PC-9 (cell line): ENCODE measurements at regions of chr11 and their contacts with region 1.

Region 1: GRCh38 chr11:103529181-103529684 is 420.0 kb downstream of the DYNC2H1 start:
- DNase-seq: peak; percentile 19 to 66
- H3K4me3 ChIP-seq: no peak overlapping the region
- H3K27ac ChIP-seq: peak overlapping the region; percentile 5; the same call in 1 of the 2 replicates
- H3K4me1 ChIP-seq: peaks cover 55% of the 10 kb centered on the region
- H3K27me3 ChIP-seq: no peaks in the 10 kb centered on the region
- CTCF ChIP-seq: no peak

Region 2: DNA sequence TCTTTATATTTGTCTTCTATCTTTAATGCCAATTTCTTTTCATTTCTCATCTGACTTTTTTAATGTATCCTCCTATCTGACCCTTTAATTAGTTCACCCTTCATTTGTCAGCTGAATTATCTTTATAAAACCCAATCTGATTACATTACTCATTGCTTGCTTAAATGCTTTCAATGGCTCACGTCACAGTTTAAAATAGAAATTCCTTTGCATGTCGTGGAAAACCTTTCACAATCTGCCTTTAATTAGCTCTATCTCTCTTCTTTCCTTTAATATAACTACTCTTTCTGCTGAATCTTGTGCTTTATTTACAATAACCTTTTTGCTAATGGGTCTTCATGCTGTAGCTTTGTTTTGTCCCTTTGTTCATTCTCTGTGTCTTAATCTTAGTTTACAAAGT is 294.3 kb before region 1 on chr11:
- CTCF ChIA-PET with region 1: no interaction called
- POLR2A ChIA-PET with region 1: no interaction called
- intact Hi-C with region 1: no loop called
- DNase-seq: no peak
- H3K4me3 ChIP-seq: no peak overlapping the region
- H3K27ac ChIP-seq: no peak overlapping the region
- H3K4me1 ChIP-seq: no peaks in the 10 kb centered on the region
- H3K27me3 ChIP-seq: no peaks in the 10 kb centered on the region
- CTCF ChIP-seq: no peak

Region 3: DNA sequence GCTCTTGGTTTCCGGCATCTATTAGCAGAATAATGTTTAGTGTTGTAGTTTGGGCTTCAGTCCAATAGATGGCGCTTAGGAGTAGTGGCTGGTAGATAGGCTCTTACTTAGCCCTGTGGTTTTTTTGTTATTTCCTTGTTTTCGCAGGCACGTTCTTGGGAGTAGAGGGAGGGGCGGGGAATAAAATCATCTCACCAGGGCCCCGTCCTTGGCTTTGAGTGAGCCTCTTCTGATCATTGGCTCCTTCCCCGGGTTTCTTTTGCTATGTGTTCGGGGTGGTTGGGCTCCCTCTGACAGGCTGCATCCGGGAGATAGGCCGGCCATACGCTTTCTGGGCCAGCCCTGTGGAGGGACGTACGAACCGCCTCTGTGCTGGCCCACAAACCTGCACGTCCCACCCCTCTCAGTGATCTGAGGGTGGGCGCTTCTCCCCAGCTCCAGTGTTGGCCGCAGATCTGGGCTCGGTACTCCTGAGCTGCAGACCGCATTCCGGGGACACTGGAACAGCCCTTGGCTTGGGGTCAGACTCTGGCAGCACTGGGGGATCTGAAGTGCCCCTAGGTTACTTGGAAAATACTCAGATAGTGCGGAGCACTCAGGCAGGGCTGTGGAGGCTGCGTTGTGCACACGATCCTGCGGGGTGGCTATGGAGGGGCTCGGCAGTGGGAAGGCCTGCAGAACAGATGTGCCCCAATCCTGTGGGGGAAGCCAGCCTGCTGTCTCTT is 203.0 kb before region 1 on chr11:
- CTCF ChIA-PET with region 1: no interaction called
- POLR2A ChIA-PET with region 1: no interaction called
- intact Hi-C with region 1: loop called (anchors 5 kb)
- DNase-seq: peak; percentile 29 to 49
- H3K4me3 ChIP-seq: no peak overlapping the region
- H3K27ac ChIP-seq: no peak overlapping the region
- H3K4me1 ChIP-seq: no peaks in the 10 kb centered on the region
- H3K27me3 ChIP-seq: no peaks in the 10 kb centered on the region
- CTCF ChIP-seq: peak; percentile 85

Region 4: GRCh38 chr11:103433386-103434380 is 95.5 kb before region 1 on chr11:
- CTCF ChIA-PET with region 1: no interaction called
- POLR2A ChIA-PET with region 1: no interaction called
- intact Hi-C with region 1: loop called (anchors 2 kb)
- DNase-seq: peak in 1 of 2 experiments; percentile 69
- H3K4me3 ChIP-seq: no peak overlapping the region
- H3K27ac ChIP-seq: no peak overlapping the region
- H3K4me1 ChIP-seq: 0 out of 2 replicates have a peak, but pooled peaks cover 4% of the 10 kb centered on the region
- H3K27me3 ChIP-seq: no peaks in the 10 kb centered on the region
- CTCF ChIP-seq: no peak

Region 5: DNA sequence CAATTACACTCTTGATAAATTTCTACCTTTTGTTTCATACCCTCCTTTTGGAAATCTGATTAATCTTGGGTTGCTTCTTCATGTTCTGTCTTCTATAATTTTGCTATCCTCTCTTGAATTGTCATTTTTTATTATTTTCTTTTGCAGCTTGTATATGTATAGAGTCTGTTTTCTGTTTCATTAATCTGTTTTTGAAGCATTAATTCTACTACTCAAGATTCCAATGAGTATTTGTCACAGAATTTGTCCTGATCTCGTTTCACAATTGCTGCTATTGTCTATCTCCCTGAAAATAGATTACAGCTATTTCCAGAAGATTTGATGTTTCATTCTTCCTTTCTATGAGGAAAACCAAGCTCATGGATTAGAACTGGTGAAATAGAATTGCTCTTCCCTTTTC is 13.9 kb before region 1 on chr11:
- CTCF ChIA-PET with region 1: no interaction called
- POLR2A ChIA-PET with region 1: no interaction called
- intact Hi-C with region 1: no loop called
- DNase-seq: no peak
- H3K4me3 ChIP-seq: no peak overlapping the region
- H3K27ac ChIP-seq: no peak overlapping the region
- H3K4me1 ChIP-seq: no peaks in the 10 kb centered on the region
- H3K27me3 ChIP-seq: no peaks in the 10 kb centered on the region
- CTCF ChIP-seq: no peak

Region 6: DNA sequence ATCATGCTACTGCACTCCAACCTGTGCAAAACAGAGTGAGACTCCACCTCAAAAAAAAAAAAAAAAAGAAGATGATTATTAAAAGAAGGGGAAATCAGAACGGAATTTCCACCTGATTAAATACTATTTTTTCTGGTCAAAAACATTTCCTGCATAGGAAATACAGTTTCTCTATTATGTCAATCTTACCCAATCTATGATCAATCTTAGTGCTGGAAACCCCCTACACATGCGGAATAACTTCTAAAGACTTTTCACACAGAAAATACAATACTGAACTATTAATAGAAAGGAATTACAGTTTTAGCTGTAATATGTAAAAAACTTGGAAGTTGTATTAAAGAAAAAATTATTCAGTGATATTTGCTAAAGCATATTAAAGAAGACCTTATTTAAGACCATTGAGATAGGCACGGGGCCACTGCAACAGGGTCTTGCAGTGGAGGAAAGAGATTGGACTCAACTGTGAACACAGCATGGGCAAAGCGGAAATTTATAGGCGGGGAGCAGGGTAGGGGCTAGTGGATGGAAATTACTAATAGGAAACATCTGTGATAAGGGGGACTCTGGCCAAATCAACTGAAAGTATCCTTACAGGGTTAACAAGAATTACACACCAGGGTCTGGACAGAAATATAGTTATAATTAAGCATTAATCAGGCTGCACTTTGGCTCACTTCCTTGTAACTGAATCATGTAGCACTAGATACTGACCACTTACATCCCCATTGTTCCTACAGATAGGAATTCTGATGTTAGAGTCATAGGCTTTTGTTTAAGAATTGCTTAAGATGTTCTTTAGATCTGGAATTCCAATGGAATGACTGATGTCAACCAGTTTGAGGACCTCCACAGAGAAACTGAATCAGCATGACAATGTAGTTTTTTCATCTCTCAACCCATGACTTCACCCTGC is 95.7 kb after region 1 on chr11:
- CTCF ChIA-PET with region 1: no interaction called
- POLR2A ChIA-PET with region 1: no interaction called
- intact Hi-C with region 1: loop called (anchors 1 kb)
- DNase-seq: peak; percentile 25 to 99
- H3K4me3 ChIP-seq: 0 out of 2 replicates have a peak overlapping the region, but pooled peaks have one; percentile 2
- H3K27ac ChIP-seq: peak overlapping the region; percentile 98
- H3K4me1 ChIP-seq: peaks cover 44% of the 10 kb centered on the region
- H3K27me3 ChIP-seq: no peaks in the 10 kb centered on the region
- CTCF ChIP-seq: no peak